Mammary epithelial cell (primary cell): ENCODE measurements at regions of chr4 and their contacts with region 1.

Region 1: GRCh38 chr4:109977854-109978501 is 65.3 kb downstream of the EGF start:
- DNase-seq: peak; percentile 40
- H3K4me3 ChIP-seq: no peak overlapping the region
- H3K27ac ChIP-seq: no peak overlapping the region
- H3K4me1 ChIP-seq: peaks cover 18% of the 10 kb centered on the region
- H3K27me3 ChIP-seq: no peaks in the 10 kb centered on the region
- CTCF ChIP-seq: peak; percentile 63 to 64

Region 2: GRCh38 chr4:109424093-109424841 is 553.7 kb before region 1 on chr4:
- CTCF ChIA-PET with region 1: no interaction called
- dilution Hi-C with region 1: no loop called
- in situ Hi-C with region 1: loop called in 1 of 2 experiments (anchors 10 kb)
- intact Hi-C with region 1: loop called (anchors 1 kb)
- DNase-seq: no peak
- H3K4me3 ChIP-seq: no peak overlapping the region
- H3K27ac ChIP-seq: no peak overlapping the region
- H3K4me1 ChIP-seq: no peaks in the 10 kb centered on the region
- H3K27me3 ChIP-seq: no peaks in the 10 kb centered on the region
- CTCF ChIP-seq: no peak

Region 3: GRCh38 chr4:109548655-109549054 is 429.3 kb before region 1 on chr4:
- CTCF ChIA-PET with region 1: no interaction called
- dilution Hi-C with region 1: no loop called
- in situ Hi-C with region 1: loop called in 1 of 2 experiments (anchors 25 kb)
- intact Hi-C with region 1: loop called (anchors 10 kb)
- DNase-seq: peak; percentile 92
- H3K4me3 ChIP-seq: no peak overlapping the region
- H3K27ac ChIP-seq: peak overlapping the region; percentile 63
- H3K4me1 ChIP-seq: peaks cover 20% of the 10 kb centered on the region
- H3K27me3 ChIP-seq: no peaks in the 10 kb centered on the region
- CTCF ChIP-seq: no peak

Region 4: GRCh38 chr4:109649872-109650271 is 328.1 kb before region 1 on chr4:
- CTCF ChIA-PET with region 1: no interaction called
- dilution Hi-C with region 1: no loop called
- in situ Hi-C with region 1: no loop called
- intact Hi-C with region 1: no loop called
- DNase-seq: no peak
- H3K4me3 ChIP-seq: no peak overlapping the region
- H3K27ac ChIP-seq: no peak overlapping the region
- H3K4me1 ChIP-seq: no peaks in the 10 kb centered on the region
- H3K27me3 ChIP-seq: no peaks in the 10 kb centered on the region
- CTCF ChIP-seq: no peak

Region 5: DNA sequence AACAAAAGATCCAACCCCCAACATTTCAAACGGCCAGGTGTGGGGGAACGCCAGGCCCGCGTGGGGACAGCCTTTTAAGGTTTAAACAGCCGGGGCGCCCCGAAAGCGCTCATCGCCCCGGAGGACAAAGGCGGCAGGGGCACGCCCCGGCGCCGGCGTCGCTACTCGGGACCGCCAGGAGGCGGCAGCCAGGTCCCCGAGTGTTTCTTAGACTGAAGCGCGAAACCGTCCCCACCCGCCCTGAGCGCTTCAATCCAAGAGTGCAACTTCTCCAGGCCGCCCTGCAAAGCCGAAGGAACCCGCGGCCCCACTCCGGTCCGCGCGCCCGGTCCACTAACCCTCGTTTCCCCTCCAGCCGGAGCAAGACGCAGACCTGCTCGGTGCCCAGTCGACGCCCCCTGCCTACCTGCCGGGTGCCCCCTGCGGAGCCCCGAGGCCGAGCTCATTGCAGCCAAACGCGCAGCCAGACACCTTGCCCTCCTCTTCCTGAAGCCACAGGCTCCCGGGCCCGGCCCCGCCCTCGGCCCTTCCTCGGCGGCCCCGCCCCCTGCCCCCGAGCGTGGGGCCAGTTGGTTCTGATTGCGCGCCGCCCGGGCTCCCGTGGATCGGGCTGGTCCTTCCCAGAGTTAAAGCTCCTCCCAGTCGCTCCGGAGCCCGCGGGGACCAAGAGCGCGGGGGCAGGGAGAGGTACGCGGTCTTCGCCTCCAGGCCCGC is 274.9 kb before region 1 on chr4 and contains the start of gene CASP6:
- CTCF ChIA-PET with region 1: no interaction called
- dilution Hi-C with region 1: no loop called
- in situ Hi-C with region 1: loop called in 1 of 2 experiments (anchors 25 kb)
- intact Hi-C with region 1: loop called (anchors 1 kb)
- DNase-seq: peak; percentile 71
- H3K4me3 ChIP-seq: peak within 1 kb of the TSS; percentile 69 to 95 (median 69)
- H3K27ac ChIP-seq: peak within 1 kb of the TSS; percentile 65
- H3K4me1 ChIP-seq: peaks cover 14% of the 10 kb centered on the region
- H3K27me3 ChIP-seq: no peaks in the 10 kb centered on the region
- CTCF ChIP-seq: peak; percentile 20 to 73
- total RNA-seq, gene CASP6: 20.0 to 45.5 TPM

Region 6: GRCh38 chr4:109921384-109921808 is 56.6 kb before region 1 on chr4:
- CTCF ChIA-PET with region 1: interaction called, 12 read pairs
- dilution Hi-C with region 1: no loop called
- in situ Hi-C with region 1: no loop called
- intact Hi-C with region 1: no loop called
- DNase-seq: peak; percentile 80
- H3K4me3 ChIP-seq: no peak overlapping the region
- H3K27ac ChIP-seq: no peak overlapping the region
- H3K4me1 ChIP-seq: no peaks in the 10 kb centered on the region
- H3K27me3 ChIP-seq: no peaks in the 10 kb centered on the region
- CTCF ChIP-seq: no peak

Region 7: GRCh38 chr4:109998867-109999584 is 21.0 kb after region 1 on chr4:
- CTCF ChIA-PET with region 1: no interaction called
- dilution Hi-C with region 1: no loop called
- in situ Hi-C with region 1: no loop called
- intact Hi-C with region 1: no loop called
- DNase-seq: peak; percentile 44
- H3K4me3 ChIP-seq: no peak overlapping the region
- H3K27ac ChIP-seq: no peak overlapping the region
- H3K4me1 ChIP-seq: no peaks in the 10 kb centered on the region
- H3K27me3 ChIP-seq: no peaks in the 10 kb centered on the region
- CTCF ChIP-seq: peak; percentile 53 to 69